ENCODE measurements at regions of chr18 and their contacts with region 1.

Region 1: GRCh38 chr18:50266248-50266704 is at the start of gene CFAP53:
- DNase-seq: peak; percentile 81
- ATAC-seq: peak; percentile 99
- H3K4me3 ChIP-seq: peak within 1 kb of the TSS; percentile 74 to 85 (median 78)
- H3K27ac ChIP-seq: no peak within 1 kb of the TSS
- H3K4me1 ChIP-seq: peaks cover 13% of the 10 kb centered on the region
- H3K27me3 ChIP-seq: no peaks in the 10 kb centered on the region; a peak in 1 of 5 replicates
- CTCF ChIP-seq: no peak
- EP300 ChIP-seq: no peak
- POLR2A ChIP-seq: peak in 1 of 2 experiments; percentile 29; a peak in 2 of 4 replicates
- RAD21 ChIP-seq: 0 out of 2 replicates have a peak, but pooled peaks have one; percentile 13
- total RNA-seq, gene CFAP53: 0.07 TPM in 1 of 2 replicates, not detected in the other

Region 2: GRCh38 chr18:50138181-50139064 is 127.9 kb before region 1 on chr18:
- CTCF ChIA-PET with region 1: no interaction called
- POLR2A ChIA-PET with region 1: no interaction called
- in situ Hi-C with region 1: no loop called
- intact Hi-C with region 1: no loop called
- DNase-seq: no peak
- ATAC-seq: no peak
- H3K4me3 ChIP-seq: no peak overlapping the region
- H3K27ac ChIP-seq: no peak overlapping the region
- H3K4me1 ChIP-seq: peaks cover 4% of the 10 kb centered on the region
- H3K27me3 ChIP-seq: no peaks in the 10 kb centered on the region
- CTCF ChIP-seq: no peak
- EP300 ChIP-seq: no peak
- POLR2A ChIP-seq: no peak
- RAD21 ChIP-seq: no peak

Region 3: DNA sequence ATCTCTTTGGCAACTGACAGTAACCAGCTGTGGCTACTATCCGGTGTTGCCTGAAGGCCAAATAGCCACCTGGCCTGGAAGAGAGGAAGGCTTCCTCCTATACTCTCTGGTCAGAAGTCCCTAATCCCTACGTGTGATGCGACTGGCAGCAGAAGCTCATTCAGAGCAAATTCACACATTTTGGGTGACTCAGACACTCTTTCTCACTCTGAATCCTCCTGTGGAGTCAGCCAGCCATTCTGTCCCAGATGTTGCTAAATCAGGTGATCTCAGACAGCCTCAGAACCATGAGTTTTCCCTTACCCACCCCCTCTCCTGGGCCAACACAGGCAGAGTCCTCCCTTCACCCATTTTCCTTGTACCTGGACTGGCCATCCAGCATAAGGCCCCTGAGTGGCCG is 34.7 kb before region 1 on chr18:
- CTCF ChIA-PET with region 1: no interaction called
- POLR2A ChIA-PET with region 1: no interaction called
- in situ Hi-C with region 1: no loop called
- intact Hi-C with region 1: no loop called
- DNase-seq: no peak
- ATAC-seq: no peak
- H3K4me3 ChIP-seq: no peak overlapping the region
- H3K27ac ChIP-seq: no peak overlapping the region
- H3K4me1 ChIP-seq: no peaks in the 10 kb centered on the region
- H3K27me3 ChIP-seq: peaks cover 0 to 11% of the 10 kb centered on the region in 2 experiments; a peak in 2 of 5 replicates
- CTCF ChIP-seq: no peak
- EP300 ChIP-seq: no peak
- POLR2A ChIP-seq: no peak
- RAD21 ChIP-seq: no peak

Region 4: GRCh38 chr18:50281295-50281971 is 15.2 kb after region 1 on chr18 and contains the start of gene MBD1:
- CTCF ChIA-PET with region 1: no interaction called
- POLR2A ChIA-PET with region 1: interaction called, 11 read pairs
- in situ Hi-C with region 1: no loop called
- intact Hi-C with region 1: loop called (anchors 1 kb)
- DNase-seq: peak; percentile 93
- ATAC-seq: peak; percentile 96
- H3K4me3 ChIP-seq: peak within 1 kb of the TSS; percentile 83 to 100 (median 88)
- H3K27ac ChIP-seq: peak within 1 kb of the TSS; percentile 70
- H3K4me1 ChIP-seq: peaks cover 29% of the 10 kb centered on the region
- H3K27me3 ChIP-seq: no peaks in the 10 kb centered on the region; a peak in 1 of 5 replicates
- CTCF ChIP-seq: peak; percentile 66
- EP300 ChIP-seq: no peak
- POLR2A ChIP-seq: peak in 1 of 2 experiments; percentile 71; a peak in 2 of 4 replicates
- RAD21 ChIP-seq: 0 out of 2 replicates have a peak, but pooled peaks have one; percentile 16
- total RNA-seq, gene MBD1: 15.2 and 25.5 TPM in 2 replicates

Region 5: DNA sequence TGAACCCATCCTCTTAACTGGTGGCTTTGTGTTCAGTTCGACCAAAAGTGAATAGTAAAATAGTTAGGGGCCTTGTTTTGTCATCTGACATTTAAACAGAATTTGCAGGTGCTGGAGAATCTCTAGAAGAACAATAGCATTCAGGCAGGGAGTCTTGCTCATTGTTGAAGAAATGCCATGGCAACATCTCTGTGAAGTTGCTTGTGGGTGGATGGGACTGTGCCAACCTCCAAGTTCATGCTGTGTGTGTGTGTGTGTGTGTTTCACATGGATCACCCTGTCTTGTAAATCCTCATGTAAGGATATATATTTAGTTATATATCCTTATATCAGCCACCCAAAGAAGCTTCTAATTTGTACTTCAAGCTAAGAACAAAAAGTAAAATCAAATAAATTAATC is 175.2 kb after region 1 on chr18:
- CTCF ChIA-PET with region 1: no interaction called
- POLR2A ChIA-PET with region 1: no interaction called
- in situ Hi-C with region 1: no loop called
- intact Hi-C with region 1: no loop called
- DNase-seq: no peak
- ATAC-seq: no peak
- H3K4me3 ChIP-seq: no peak overlapping the region
- H3K27ac ChIP-seq: no peak overlapping the region
- H3K4me1 ChIP-seq: no peaks in the 10 kb centered on the region
- H3K27me3 ChIP-seq: no peaks in the 10 kb centered on the region
- CTCF ChIP-seq: no peak
- EP300 ChIP-seq: no peak
- POLR2A ChIP-seq: no peak
- RAD21 ChIP-seq: no peak